PC-9 (cell line): ENCODE measurements at regions of chr3 and their contacts with region 1.

Region 1: GRCh38 chr3:4279516-4280105 is 23.6 kb upstream of the SETMAR start:
- DNase-seq: no peak
- H3K4me3 ChIP-seq: no peak overlapping the region
- H3K27ac ChIP-seq: no peak overlapping the region
- H3K4me1 ChIP-seq: no peaks in the 10 kb centered on the region
- H3K27me3 ChIP-seq: no peaks in the 10 kb centered on the region
- CTCF ChIP-seq: no peak

Region 2: DNA sequence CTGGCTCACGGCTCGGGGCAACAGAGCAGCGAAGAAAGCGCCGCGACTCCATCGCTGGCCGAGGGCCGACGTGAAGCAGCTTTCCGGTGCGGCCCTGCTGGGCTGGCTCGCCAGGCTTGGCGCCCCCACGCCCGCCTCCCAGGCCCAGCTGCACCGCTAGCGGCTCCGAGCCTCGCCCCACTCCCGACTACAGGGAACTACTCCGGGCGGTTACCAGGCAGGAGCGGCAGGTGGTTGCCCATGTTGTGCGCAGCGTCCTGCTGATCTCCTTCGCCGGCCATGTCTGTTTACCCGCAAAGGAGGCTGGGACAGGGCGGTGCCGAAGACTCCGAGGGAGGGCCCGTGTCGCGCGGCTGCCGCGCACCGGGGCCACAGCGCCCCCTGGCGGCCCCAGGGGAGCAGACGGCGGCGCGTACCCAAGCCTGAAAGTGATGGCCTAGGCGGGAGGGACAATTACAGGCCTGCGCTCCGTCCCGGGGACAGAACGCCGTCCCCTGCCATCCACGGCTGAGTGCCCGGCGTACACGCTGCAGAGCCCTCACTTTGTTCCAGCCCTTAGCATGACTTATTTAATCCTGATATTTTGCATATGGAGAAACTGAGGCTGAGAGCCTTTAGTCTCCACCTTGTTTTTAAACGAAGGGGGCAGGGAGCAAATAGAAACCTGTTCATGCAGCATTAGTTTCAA is 1100.1 kb before region 1 on chr3 and contains the start of gene CRBN:
- CTCF ChIA-PET with region 1: no interaction called
- POLR2A ChIA-PET with region 1: interaction called, 11 read pairs
- intact Hi-C with region 1: no loop called
- DNase-seq: peak; percentile 59 to 85
- H3K4me3 ChIP-seq: peak within 1 kb of the TSS; percentile 70
- H3K27ac ChIP-seq: no peak within 1 kb of the TSS
- H3K4me1 ChIP-seq: 0 out of 2 replicates have a peak, but pooled peaks cover 10% of the 10 kb centered on the region
- H3K27me3 ChIP-seq: no peaks in the 10 kb centered on the region
- CTCF ChIP-seq: peak; percentile 82
- total RNA-seq, gene CRBN: 26.4 and 34.9 TPM in 2 replicates

Region 3: DNA sequence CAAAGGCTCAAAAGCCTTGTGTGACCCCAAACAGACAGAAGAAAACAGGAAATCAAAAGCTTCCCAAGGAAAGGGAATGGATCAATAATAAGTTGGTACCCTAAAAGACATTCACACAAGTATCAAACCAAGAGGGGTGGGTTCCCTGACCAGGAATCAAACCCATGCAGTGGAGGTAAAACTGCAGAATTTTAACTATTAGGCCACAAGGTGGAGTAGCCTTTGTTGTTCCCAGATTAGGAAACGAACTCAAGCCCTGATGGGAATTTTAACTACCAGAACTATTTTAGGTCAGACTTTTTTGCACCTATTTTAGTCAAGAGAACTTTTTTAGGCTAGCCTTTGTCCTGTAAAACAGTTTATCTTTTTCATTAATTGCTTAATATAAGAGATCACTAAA is 54.9 kb after region 1 on chr3:
- CTCF ChIA-PET with region 1: no interaction called
- POLR2A ChIA-PET with region 1: no interaction called
- intact Hi-C with region 1: no loop called
- DNase-seq: no peak
- H3K4me3 ChIP-seq: no peak overlapping the region
- H3K27ac ChIP-seq: no peak overlapping the region
- H3K4me1 ChIP-seq: no peaks in the 10 kb centered on the region
- H3K27me3 ChIP-seq: no peaks in the 10 kb centered on the region
- CTCF ChIP-seq: no peak

Region 4: DNA sequence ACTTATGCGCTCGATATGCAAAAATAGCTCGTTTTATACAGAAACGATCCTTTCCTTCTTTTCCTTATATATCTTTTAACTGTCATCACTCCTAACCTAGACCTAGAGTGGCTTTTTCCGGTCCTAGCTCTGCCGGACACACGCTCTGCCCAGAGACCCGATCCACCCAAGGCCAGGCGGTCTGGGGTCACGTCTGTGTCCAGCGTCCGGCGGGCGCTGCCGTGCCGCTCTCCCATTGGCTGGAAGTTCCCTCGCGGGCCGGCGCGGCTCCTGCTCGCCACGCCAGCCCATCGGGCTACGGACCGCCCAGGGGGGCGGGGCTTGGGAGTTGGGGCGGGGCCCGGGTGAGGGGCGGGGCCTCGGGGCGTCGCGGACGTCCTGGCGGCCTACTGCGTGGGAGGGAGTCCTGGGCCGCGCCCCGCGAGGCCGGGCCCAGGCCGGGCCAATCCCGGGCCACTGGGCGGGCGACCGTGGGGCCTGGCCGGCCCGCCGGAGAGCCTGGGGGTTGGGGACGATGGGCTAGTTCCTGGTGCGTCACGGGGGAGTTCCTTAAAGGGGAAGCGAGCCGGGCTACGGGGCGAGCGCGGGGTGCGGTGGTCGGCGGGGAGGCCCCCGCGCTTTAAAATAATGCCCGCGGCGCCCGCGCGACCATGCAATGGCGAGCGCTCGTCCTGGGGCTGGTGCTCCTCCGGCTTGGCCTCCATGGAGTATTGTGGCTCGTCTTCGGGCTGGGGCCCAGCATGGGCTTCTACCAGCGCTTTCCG is 907.7 kb after region 1 on chr3 and contains the start of gene EDEM1:
- CTCF ChIA-PET with region 1: no interaction called
- POLR2A ChIA-PET with region 1: no interaction called
- intact Hi-C with region 1: no loop called
- DNase-seq: peak; percentile 73 to 98
- H3K4me3 ChIP-seq: peak within 1 kb of the TSS; percentile 78
- H3K27ac ChIP-seq: peak within 1 kb of the TSS; percentile 73
- H3K4me1 ChIP-seq: peaks cover 22% of the 10 kb centered on the region
- H3K27me3 ChIP-seq: no peaks in the 10 kb centered on the region
- CTCF ChIP-seq: no peak
- total RNA-seq, gene EDEM1: 53.5 and 55.9 TPM in 2 replicates